Activated CD4-positive, alpha-beta memory T cell treated with anti-CD3 and anti-CD28 coated beads for 36 hours (primary cell): ENCODE measurements at regions of chr7 and their contacts with region 1.

Region 1: DNA sequence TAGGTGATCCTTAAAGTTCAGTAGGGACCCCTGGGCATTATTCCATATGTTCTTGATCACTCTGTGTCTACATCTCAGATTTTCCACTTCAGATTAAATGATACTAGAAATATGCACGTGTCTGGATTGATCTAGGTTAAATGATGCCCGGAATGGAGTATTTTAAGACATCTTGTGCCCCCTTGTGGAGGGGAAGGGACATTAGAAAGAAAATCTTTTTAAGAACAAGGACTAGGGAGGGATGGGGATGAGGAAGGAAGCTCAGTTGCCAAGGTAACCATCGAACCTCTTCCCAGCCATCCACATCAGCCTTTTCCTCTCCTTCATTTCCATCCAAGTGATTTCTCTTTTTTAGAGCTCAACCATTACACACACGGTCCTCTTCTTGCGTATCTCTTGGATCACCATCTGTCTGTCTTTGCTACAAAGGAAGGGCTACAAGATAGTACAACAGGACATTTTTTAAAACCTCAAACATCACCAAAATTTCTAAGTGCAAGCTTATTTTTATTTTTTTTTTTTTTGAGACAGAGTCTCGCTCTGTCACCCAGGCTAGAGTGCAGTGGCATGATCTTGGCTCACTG is 40.5 kb downstream of the PRSS2 start:
- DNase-seq: peak; percentile 29
- H3K4me3 Mint-ChIP-seq: peak overlapping the region; percentile 62
- H3K27ac Mint-ChIP-seq: peak overlapping the region; percentile 100
- H3K4me1 Mint-ChIP-seq: peaks cover 76% of the 10 kb centered on the region
- H3K27me3 Mint-ChIP-seq: no peaks in the 10 kb centered on the region

Region 2: DNA sequence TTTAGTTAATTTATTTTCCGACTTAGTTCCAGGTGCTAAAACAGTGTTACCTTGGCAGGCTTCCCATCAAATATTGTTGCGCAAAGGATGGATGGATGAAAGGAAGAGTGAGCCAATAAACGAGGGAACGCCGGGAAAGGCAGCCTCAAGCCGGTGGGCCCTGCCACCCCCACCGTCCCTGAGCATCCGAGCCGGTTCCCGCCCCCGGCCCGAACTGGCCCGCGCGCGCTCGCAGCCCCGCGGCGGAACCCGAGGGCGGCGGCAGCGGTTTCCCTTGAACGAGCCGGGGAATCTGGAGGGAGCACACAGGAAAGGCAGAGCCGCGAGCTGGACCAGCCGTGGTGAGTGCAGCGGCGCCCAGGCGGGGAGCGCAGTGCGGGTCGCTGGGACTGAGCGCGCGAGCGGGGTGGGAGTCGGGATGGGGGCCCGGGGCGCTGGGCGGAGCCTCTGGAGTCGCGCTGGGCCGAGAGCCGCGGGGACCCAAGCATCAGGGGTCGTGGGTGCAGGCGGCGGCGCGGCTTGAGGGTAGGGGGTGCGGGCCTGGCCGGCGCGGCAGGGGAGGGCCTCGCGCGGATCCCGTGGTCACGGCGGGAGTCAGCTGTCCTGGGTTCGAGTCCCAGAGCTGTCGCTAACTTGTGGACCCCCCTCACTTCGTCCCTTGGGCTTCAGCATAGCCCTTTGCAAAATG is 1260.0 kb before region 1 on chr7 and contains the start of gene AGK:
- CTCF ChIA-PET with region 1: no interaction called
- POLR2A ChIA-PET with region 1: no interaction called
- intact Hi-C with region 1: loop called (anchors 10 kb)
- DNase-seq: peak; percentile 87
- H3K4me3 Mint-ChIP-seq: peak within 1 kb of the TSS; percentile 91
- H3K27ac Mint-ChIP-seq: peak within 1 kb of the TSS; percentile 87
- H3K4me1 Mint-ChIP-seq: peaks cover 31% of the 10 kb centered on the region
- H3K27me3 Mint-ChIP-seq: no peaks in the 10 kb centered on the region
- total RNA-seq, gene AGK: 50.2 to 57.2 TPM

Region 3: DNA sequence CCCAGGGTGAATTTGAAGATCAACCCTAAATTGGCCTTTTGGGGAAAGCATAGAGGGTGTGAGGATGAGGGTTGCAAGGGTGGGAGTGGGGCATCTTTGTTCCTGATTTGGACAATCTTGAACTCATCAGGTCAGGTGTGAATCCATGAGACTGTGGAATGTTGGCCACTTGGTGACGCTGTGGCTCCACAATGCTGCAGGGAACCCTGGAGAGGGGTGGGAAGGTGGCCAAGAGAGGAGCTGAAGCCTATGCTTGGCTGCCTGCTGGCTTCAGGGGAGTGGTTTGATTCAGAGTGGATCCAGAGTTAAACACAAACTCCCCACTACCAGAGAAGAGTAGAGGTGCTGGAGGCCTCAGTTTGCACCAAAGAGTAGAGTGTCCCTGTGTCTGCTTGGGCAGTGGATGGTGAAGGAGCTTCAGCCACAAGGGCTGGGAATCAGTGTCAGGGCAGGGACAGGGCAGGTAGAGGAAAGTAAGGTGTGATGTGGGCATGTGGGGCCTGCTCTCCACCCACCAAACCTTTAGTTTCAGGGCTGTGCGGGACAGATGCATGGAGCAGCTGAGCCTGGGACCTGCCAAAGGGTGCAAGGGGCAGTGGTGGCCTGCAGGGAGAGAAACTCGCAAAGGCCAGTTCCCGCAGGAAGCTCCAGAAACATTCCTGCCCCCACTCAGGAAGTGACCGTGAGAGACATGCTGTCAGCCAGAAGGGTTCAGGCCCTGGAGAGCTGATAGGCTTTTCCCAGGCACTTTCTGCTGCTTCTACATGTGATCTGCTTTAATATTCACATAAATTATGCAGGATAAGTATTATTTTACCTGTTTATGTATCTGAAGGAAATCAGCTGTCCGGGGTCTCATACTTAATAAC is 472.4 kb before region 1 on chr7:
- CTCF ChIA-PET with region 1: interaction called, 4 read pairs
- POLR2A ChIA-PET with region 1: interaction called, 3 read pairs
- intact Hi-C with region 1: loop called (anchors 5 kb)
- DNase-seq: peak; percentile 56
- H3K4me3 Mint-ChIP-seq: no peak overlapping the region
- H3K27ac Mint-ChIP-seq: peak overlapping the region; percentile 23
- H3K4me1 Mint-ChIP-seq: peaks cover 18% of the 10 kb centered on the region
- H3K27me3 Mint-ChIP-seq: peaks cover 1% of the 10 kb centered on the region

Region 4: DNA sequence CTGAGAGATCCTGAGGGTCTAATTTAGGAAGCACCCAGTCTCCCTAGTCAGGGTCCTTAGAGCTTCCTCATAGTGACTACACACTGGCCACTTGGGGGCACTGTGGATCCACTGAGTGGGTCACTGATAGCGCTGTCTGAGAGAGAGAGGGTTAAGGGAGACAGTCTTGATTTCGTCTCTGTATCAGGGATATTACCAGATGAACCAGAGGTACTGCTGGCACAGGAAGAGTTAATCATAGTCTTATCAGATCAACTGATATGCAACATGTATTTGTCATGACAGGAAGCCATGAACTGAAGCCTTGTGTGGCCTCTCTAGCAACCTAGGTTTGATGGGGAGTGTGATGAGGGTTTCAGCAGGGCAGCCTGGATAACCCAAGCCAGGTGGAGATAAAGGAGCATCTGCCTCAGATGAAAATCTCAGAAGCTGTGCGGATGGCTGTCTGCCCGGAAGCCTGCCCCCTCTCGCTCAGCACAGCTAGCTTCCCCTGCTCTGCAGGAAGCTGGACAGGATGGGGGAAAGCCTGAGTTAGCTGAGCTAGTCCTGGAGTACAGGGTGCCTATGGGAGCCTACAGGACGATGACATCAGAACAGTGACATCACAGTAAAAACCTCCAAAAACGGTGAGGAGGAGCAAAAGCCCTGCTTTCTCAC is 276.0 kb before region 1 on chr7:
- CTCF ChIA-PET with region 1: interaction called, 45 read pairs
- POLR2A ChIA-PET with region 1: interaction called, 29 read pairs
- intact Hi-C with region 1: loop called (anchors 1 kb)
- DNase-seq: peak; percentile 89
- H3K4me3 Mint-ChIP-seq: peak overlapping the region; percentile 67
- H3K27ac Mint-ChIP-seq: peak overlapping the region; percentile 86
- H3K4me1 Mint-ChIP-seq: peaks cover 32% of the 10 kb centered on the region
- H3K27me3 Mint-ChIP-seq: peaks cover 3% of the 10 kb centered on the region

Region 5: GRCh38 chr7:142595816-142596516 is 215.3 kb before region 1 on chr7:
- CTCF ChIA-PET with region 1: no interaction called
- POLR2A ChIA-PET with region 1: no interaction called
- intact Hi-C with region 1: no loop called
- DNase-seq: no peak
- H3K4me3 Mint-ChIP-seq: no peak overlapping the region
- H3K27ac Mint-ChIP-seq: no peak overlapping the region
- H3K4me1 Mint-ChIP-seq: no peaks in the 10 kb centered on the region
- H3K27me3 Mint-ChIP-seq: no peaks in the 10 kb centered on the region

Region 6: GRCh38 chr7:142626420-142627035 is 184.7 kb before region 1 on chr7:
- CTCF ChIA-PET with region 1: interaction called, 71 read pairs
- POLR2A ChIA-PET with region 1: no interaction called
- intact Hi-C with region 1: loop called (anchors 1 kb)
- DNase-seq: peak; percentile 79
- H3K4me3 Mint-ChIP-seq: peak overlapping the region; percentile 78
- H3K27ac Mint-ChIP-seq: peak overlapping the region; percentile 86
- H3K4me1 Mint-ChIP-seq: no peaks in the 10 kb centered on the region
- H3K27me3 Mint-ChIP-seq: no peaks in the 10 kb centered on the region

Region 7: GRCh38 chr7:142782922-142783900 is 28.0 kb before region 1 on chr7:
- CTCF ChIA-PET with region 1: interaction called, 390 read pairs
- POLR2A ChIA-PET with region 1: interaction called, 517 read pairs
- intact Hi-C with region 1: loop called (anchors 1 kb)
- DNase-seq: peak; percentile 85
- H3K4me3 Mint-ChIP-seq: peak overlapping the region; percentile 70
- H3K27ac Mint-ChIP-seq: peak overlapping the region; percentile 90
- H3K4me1 Mint-ChIP-seq: peaks cover 3% of the 10 kb centered on the region
- H3K27me3 Mint-ChIP-seq: no peaks in the 10 kb centered on the region

Region 8: DNA sequence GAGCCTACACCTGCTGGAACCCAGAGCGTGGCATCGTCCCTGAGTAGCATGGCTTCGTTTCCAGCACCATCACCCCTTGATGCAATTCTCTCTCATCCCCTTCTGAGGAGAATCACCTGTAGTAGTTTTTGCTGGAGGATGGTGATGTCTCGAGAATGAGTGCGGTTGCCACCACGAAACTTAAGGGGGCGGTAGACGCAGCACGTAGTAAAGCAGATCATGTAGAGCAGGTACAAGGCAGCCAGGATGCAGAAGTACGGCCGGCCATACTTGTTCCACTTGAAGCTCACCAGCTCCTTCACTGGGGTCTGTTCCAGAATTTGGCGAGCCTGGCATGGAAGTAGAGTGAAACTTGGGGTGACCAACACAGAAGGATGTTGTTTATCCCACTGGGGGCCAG is 114.2 kb after region 1 on chr7:
- CTCF ChIA-PET with region 1: no interaction called
- POLR2A ChIA-PET with region 1: no interaction called
- intact Hi-C with region 1: no loop called
- DNase-seq: no peak
- H3K4me3 Mint-ChIP-seq: no peak overlapping the region
- H3K27ac Mint-ChIP-seq: no peak overlapping the region
- H3K4me1 Mint-ChIP-seq: no peaks in the 10 kb centered on the region
- H3K27me3 Mint-ChIP-seq: no peaks in the 10 kb centered on the region

Region 9: GRCh38 chr7:143240291-143241168 is 429.3 kb after region 1 on chr7:
- CTCF ChIA-PET with region 1: interaction called, 4 read pairs
- POLR2A ChIA-PET with region 1: interaction called, 4 read pairs
- intact Hi-C with region 1: loop called (anchors 1 kb)
- DNase-seq: peak; percentile 81
- H3K4me3 Mint-ChIP-seq: peak overlapping the region; percentile 45
- H3K27ac Mint-ChIP-seq: peak overlapping the region; percentile 73
- H3K4me1 Mint-ChIP-seq: peaks cover 30% of the 10 kb centered on the region
- H3K27me3 Mint-ChIP-seq: peaks cover 3% of the 10 kb centered on the region